Activated CD4-positive, alpha-beta T cell treated with anti-CD3 and anti-CD28 coated beads, Interleukin-2, amount 10 ng/mL, durations not matched to agents 24 days and 14 days (primary cell): ENCODE measurements at regions of chr17 and their contacts with region 1.

Region 1: DNA sequence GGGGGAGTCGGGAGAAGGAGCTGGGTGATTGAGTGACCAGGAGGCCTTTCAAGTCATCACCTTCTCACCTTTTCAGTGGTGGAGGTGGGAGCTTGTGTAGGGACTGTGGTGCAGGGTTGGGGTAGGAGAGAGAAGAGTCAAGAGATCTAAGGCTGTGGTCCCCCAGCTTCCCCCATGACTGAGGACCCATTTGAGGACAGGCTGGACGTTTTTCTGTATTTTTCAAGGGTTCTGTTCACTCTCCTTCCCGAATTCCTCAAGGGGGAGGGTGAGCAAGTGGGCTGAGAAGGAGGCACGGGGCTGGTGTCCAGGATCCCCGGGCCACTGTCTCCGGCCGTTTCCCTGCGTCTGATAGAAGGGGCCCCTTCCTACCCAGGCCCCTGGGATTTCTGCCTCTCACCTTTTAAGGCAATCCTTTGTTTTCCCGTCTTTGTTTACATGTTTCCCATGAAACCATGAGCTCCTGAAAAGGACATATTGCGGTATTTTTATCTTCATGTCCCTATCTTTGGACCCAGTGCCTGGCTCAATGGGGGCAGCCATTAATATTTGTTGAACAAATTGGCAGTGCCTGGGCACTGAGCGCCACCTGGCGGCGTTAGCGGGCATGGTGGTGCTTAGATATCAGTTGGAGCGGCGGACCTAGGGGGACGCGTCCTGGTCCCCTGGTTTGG is 9.2 kb upstream of the CD300A start:
- DNase-seq: peak; percentile 91
- H3K4me3 Mint-ChIP-seq: no peak overlapping the region
- H3K27ac Mint-ChIP-seq: no peak overlapping the region
- H3K4me1 Mint-ChIP-seq: peaks cover 34% of the 10 kb centered on the region
- H3K27me3 Mint-ChIP-seq: peaks cover 11% of the 10 kb centered on the region

Region 2: GRCh38 chr17:74305865-74306654 is 151.2 kb before region 1 on chr17:
- intact Hi-C with region 1: loop called (anchors 10 kb)
- DNase-seq: no peak
- H3K4me3 Mint-ChIP-seq: no peak overlapping the region
- H3K27ac Mint-ChIP-seq: no peak overlapping the region
- H3K4me1 Mint-ChIP-seq: peaks cover 16% of the 10 kb centered on the region
- H3K27me3 Mint-ChIP-seq: peaks cover 7% of the 10 kb centered on the region

Region 3: DNA sequence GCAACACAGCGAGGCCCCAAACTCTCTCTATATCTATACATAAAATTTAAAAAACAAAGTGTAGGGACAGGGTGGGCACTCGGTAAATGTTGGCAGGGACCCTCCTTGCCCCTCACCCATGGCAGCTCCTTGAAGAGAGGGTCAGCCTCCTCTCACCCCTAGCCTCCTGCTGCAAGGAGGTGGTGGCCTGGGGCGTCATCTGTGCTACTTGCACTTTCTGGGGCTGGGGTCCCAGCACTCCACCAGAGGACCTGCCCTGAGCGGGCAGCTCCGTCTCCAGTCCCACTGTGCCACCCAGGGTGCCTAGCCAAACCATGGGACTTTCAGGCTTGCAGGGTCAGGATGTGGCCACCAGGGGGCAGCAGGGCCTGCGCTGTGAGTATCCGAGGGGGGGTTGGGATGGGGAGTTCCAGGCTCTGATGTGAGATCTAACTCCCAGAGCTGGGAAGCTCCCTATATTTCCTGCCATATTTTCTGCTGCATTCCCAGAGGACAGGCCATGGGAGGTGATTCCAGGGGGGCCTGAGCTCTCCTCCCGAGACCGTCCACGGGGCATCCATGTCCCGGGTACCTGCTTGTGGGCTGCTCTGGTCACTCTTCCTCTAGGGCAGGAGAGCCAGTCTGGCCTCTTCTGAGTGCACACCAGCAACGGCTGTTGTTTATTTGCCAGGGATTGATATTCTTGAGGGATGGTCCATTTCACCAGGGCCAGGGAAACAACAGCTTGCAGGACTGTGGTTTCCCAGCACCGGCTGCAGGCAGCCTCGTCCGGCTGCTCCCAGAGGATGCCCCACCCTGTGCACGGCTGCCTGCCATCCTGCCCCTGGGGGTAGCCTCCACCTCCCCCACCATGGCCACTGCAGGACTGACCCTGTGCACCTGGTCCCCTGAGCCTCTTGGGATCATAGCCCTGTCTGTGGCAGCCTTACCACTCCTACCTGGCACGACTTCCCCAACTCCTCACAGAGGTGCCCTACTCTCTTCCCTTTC is 88.9 kb before region 1 on chr17:
- intact Hi-C with region 1: loop called (anchors 1 kb)
- DNase-seq: peak; percentile 92
- H3K4me3 Mint-ChIP-seq: peak overlapping the region; percentile 58
- H3K27ac Mint-ChIP-seq: no peak overlapping the region
- H3K4me1 Mint-ChIP-seq: peaks cover 14% of the 10 kb centered on the region
- H3K27me3 Mint-ChIP-seq: peaks cover 4% of the 10 kb centered on the region

Region 4: GRCh38 chr17:74493381-74493833 is 36.1 kb after region 1 on chr17:
- intact Hi-C with region 1: loop called (anchors 1 kb)
- DNase-seq: peak; percentile 91
- H3K4me3 Mint-ChIP-seq: no peak overlapping the region
- H3K27ac Mint-ChIP-seq: no peak overlapping the region
- H3K4me1 Mint-ChIP-seq: peaks cover 13% of the 10 kb centered on the region
- H3K27me3 Mint-ChIP-seq: peaks cover 5% of the 10 kb centered on the region

Region 5: GRCh38 chr17:74528491-74529199 is 71.4 kb after region 1 on chr17:
- intact Hi-C with region 1: no loop called
- DNase-seq: no peak
- H3K4me3 Mint-ChIP-seq: no peak overlapping the region
- H3K27ac Mint-ChIP-seq: no peak overlapping the region
- H3K4me1 Mint-ChIP-seq: peaks cover 5% of the 10 kb centered on the region
- H3K27me3 Mint-ChIP-seq: peaks cover 26% of the 10 kb centered on the region